CD8-positive, alpha-beta memory T cell (primary cell): ENCODE measurements at regions of chr4 and their contacts with region 1.

Region 1: GRCh38 chr4:83259586-83259985 is 25.0 kb downstream of the COQ2 start:
- DNase-seq: no peak
- H3K4me3 ChIP-seq: no peak overlapping the region
- H3K4me3 Mint-ChIP-seq: no peak overlapping the region
- H3K27ac ChIP-seq: no peak overlapping the region
- H3K27ac Mint-ChIP-seq: no peak overlapping the region
- H3K4me1 ChIP-seq: peaks cover 7% of the 10 kb centered on the region
- H3K4me1 Mint-ChIP-seq: peaks cover 17 to 20% (median 18%) of the 10 kb centered on the region in 3 donors
- H3K27me3 ChIP-seq: no peaks in the 10 kb centered on the region
- H3K27me3 Mint-ChIP-seq: no peaks in the 10 kb centered on the region

Region 2: GRCh38 chr4:83074086-83074704 is 185.4 kb before region 1 on chr4:
- CTCF ChIA-PET with region 1: interaction called, 68 read pairs
- POLR2A ChIA-PET with region 1: interaction called, 5 read pairs
- DNase-seq: peak; percentile 10 to 88 (median 71)
- H3K4me3 ChIP-seq: no peak overlapping the region
- H3K4me3 Mint-ChIP-seq: peak overlapping the region; percentile 19 to 82 (median 75)
- H3K27ac ChIP-seq: no peak overlapping the region
- H3K27ac Mint-ChIP-seq: peak overlapping the region in 7 of 8 donors; percentile 38 to 72 (median 66)
- H3K4me1 ChIP-seq: no peaks in the 10 kb centered on the region
- H3K4me1 Mint-ChIP-seq: peaks cover 6 to 16% (median 12%) of the 10 kb centered on the region in 3 donors
- H3K27me3 ChIP-seq: no peaks in the 10 kb centered on the region
- H3K27me3 Mint-ChIP-seq: no peaks in the 10 kb centered on the region

Region 3: GRCh38 chr4:83083925-83084475 is 175.6 kb before region 1 on chr4:
- CTCF ChIA-PET with region 1: interaction called, 19 read pairs
- POLR2A ChIA-PET with region 1: no interaction called
- DNase-seq: peak; percentile 26 to 82 (median 64)
- H3K4me3 ChIP-seq: peak overlapping the region; percentile 1
- H3K4me3 Mint-ChIP-seq: peak overlapping the region; percentile 17 to 73 (median 57)
- H3K27ac ChIP-seq: no peak overlapping the region
- H3K27ac Mint-ChIP-seq: peak overlapping the region; percentile 82 to 97 (median 90)
- H3K4me1 ChIP-seq: peaks cover 27% of the 10 kb centered on the region
- H3K4me1 Mint-ChIP-seq: peaks cover 36 to 44% (median 40%) of the 10 kb centered on the region in 3 donors
- H3K27me3 ChIP-seq: no peaks in the 10 kb centered on the region
- H3K27me3 Mint-ChIP-seq: no peaks in the 10 kb centered on the region

Region 4: GRCh38 chr4:83217721-83218522 is 41.7 kb before region 1 on chr4:
- CTCF ChIA-PET with region 1: interaction called, 10 read pairs
- POLR2A ChIA-PET with region 1: no interaction called
- DNase-seq: peak; percentile 37 to 89 (median 84)
- H3K4me3 ChIP-seq: peak overlapping the region; percentile 36
- H3K4me3 Mint-ChIP-seq: peak overlapping the region; percentile 25 to 88 (median 75)
- H3K27ac ChIP-seq: peak overlapping the region; percentile 12
- H3K27ac Mint-ChIP-seq: peak overlapping the region; percentile 64 to 95 (median 82)
- H3K4me1 ChIP-seq: peaks cover 72% of the 10 kb centered on the region
- H3K4me1 Mint-ChIP-seq: peaks cover 72 to 85% (median 81%) of the 10 kb centered on the region in 3 donors
- H3K27me3 ChIP-seq: no peaks in the 10 kb centered on the region
- H3K27me3 Mint-ChIP-seq: peaks cover 0 to 2% of the 10 kb centered on the region in 2 donors

Region 5: GRCh38 chr4:83455281-83456129 is 195.9 kb after region 1 on chr4 and contains the starts of genes HELQ and MRPS18C:
- CTCF ChIA-PET with region 1: no interaction called
- POLR2A ChIA-PET with region 1: no interaction called
- DNase-seq: peak; percentile 90 to 99 (median 96)
- H3K4me3 ChIP-seq: peak within 1 kb of the TSS; percentile 80
- H3K4me3 Mint-ChIP-seq: peak within 1 kb of the TSS; percentile 98 to 100 (median 100)
- H3K27ac ChIP-seq: peak within 1 kb of the TSS; percentile 99
- H3K27ac Mint-ChIP-seq: peak within 1 kb of the TSS; percentile 100
- H3K4me1 ChIP-seq: peaks cover 35% of the 10 kb centered on the region
- H3K4me1 Mint-ChIP-seq: peaks cover 43 to 73% (median 67%) of the 10 kb centered on the region in 3 donors
- H3K27me3 ChIP-seq: no peaks in the 10 kb centered on the region
- H3K27me3 Mint-ChIP-seq: peaks cover 0 to 2% of the 10 kb centered on the region in 2 donors
- total RNA-seq, gene HELQ: 14.0 to 15.3 TPM
- total RNA-seq, gene MRPS18C: 86.0 to 87.2 TPM